ENCODE measurements at regions of chr13 and their contacts with region 1.

Region 1: GRCh38 chr13:45393941-45394570 is 24.1 kb downstream of the SLC25A30 start:
- DNase-seq: peak; percentile 63
- ATAC-seq: peak; percentile 98
- H3K4me3 Mint-ChIP-seq: no peak overlapping the region
- H3K27ac Mint-ChIP-seq: 0 out of 2 replicates have a peak overlapping the region, but pooled peaks have one; percentile 11
- H3K4me1 Mint-ChIP-seq: peaks cover 5% of the 10 kb centered on the region
- H3K27me3 Mint-ChIP-seq: no peaks in the 10 kb centered on the region
- CTCF ChIP-seq: peak; percentile 51

Region 2: GRCh38 chr13:45280751-45281634 is 113.1 kb before region 1 on chr13:
- CTCF ChIA-PET with region 1: no interaction called
- POLR2A ChIA-PET with region 1: no interaction called
- DNase-seq: peak; percentile 71
- ATAC-seq: peak; percentile 99
- H3K4me3 Mint-ChIP-seq: no peak overlapping the region
- H3K27ac Mint-ChIP-seq: peak overlapping the region; percentile 18; the same call in 1 of the 2 replicates
- H3K4me1 Mint-ChIP-seq: peaks cover 6% of the 10 kb centered on the region
- H3K27me3 Mint-ChIP-seq: no peaks in the 10 kb centered on the region
- CTCF ChIP-seq: no peak

Region 3: DNA sequence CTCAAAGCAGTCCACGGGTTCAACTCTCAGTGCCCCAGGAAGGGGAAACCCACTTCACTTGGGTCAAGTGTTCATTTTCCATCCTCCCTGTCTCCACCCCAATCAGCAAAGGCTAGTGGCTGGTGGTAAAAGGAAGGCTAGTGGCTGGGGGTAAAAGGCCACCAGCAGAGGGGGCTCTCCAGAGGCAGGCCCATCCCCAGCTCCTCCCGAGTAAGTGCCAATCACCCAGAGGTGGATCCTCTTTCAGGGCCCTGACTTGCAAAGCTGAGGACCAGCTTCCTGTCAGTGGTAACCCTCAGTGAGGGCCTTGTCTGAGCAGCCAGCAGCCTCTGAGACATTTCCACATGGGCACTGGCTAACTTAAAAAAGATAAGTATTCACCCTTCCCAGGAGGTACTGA is 31.1 kb before region 1 on chr13:
- CTCF ChIA-PET with region 1: interaction called, 26 read pairs
- POLR2A ChIA-PET with region 1: no interaction called
- DNase-seq: peak; percentile 68
- ATAC-seq: peak; percentile 91
- H3K4me3 Mint-ChIP-seq: no peak overlapping the region
- H3K27ac Mint-ChIP-seq: no peak overlapping the region
- H3K4me1 Mint-ChIP-seq: peaks cover 25% of the 10 kb centered on the region
- H3K27me3 Mint-ChIP-seq: no peaks in the 10 kb centered on the region; the same call in 1 of the 2 replicates
- CTCF ChIP-seq: peak; percentile 54

Region 4: DNA sequence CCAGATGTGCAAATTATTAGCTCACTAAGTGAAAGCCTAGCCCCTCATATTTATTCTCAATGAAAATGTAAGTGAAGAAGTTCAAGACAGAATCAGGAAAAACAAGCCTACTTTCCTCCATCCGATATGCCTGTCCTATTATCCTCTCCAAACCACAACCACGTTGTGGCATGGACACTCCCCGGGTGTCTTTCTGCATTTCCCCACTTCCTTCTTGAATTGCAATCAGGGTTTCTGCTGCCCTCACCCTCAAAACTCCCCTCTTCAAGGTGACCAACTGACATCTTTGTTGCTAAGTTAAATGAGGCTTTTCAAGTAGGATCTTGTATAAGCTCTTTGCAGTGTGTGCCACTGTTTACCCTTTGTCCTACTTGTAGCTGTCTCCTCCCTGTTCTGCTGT is 12.4 kb after region 1 on chr13:
- CTCF ChIA-PET with region 1: interaction called, 12 read pairs
- POLR2A ChIA-PET with region 1: no interaction called
- DNase-seq: no peak
- ATAC-seq: no peak
- H3K4me3 Mint-ChIP-seq: no peak overlapping the region
- H3K27ac Mint-ChIP-seq: no peak overlapping the region
- H3K4me1 Mint-ChIP-seq: no peaks in the 10 kb centered on the region
- H3K27me3 Mint-ChIP-seq: no peaks in the 10 kb centered on the region
- CTCF ChIP-seq: no peak

Region 5: DNA sequence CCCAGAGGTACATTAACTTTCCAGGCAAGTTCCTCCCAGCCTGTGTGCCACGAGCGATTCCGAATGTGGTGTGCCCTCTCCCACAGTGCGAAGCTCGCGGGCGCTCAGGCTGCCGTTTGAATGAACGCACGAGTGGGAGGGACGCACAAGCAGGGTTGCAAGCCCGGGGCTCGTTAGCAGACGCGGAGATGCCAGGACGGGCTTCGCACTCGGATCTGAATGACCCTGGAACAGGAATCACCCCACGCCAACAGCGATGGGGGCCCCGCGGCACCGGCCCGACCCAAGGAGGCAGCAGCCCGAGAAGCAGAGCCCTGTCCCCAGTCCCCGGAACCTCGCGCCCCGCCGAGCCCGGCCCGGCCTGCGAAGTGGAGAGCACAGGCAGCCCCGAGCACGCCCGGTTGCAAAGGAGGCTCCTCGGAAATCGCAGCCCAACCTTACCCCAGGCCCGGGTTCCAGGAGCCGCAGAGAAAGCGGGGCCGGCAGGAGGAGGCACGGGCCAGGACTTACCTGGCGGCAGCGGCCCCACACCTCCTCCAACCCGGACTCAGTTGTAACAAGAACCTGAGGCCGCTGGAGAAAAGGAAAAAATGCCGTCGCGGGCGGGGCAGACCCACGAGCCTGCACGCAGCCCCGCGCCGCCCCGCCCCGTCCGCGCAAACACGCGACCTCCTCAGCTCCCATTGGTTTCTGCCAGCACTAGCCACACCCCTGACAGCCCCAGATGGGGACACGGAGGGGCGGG is 23.9 kb after region 1 on chr13 and contains the start of gene SLC25A30:
- CTCF ChIA-PET with region 1: interaction called, 14 read pairs
- POLR2A ChIA-PET with region 1: interaction called, 6 read pairs
- DNase-seq: peak; percentile 96
- ATAC-seq: peak; percentile 97
- H3K4me3 Mint-ChIP-seq: peak within 1 kb of the TSS; percentile 86
- H3K27ac Mint-ChIP-seq: peak within 1 kb of the TSS; percentile 93
- H3K4me1 Mint-ChIP-seq: peaks cover 11% of the 10 kb centered on the region
- H3K27me3 Mint-ChIP-seq: peaks cover 30% of the 10 kb centered on the region
- CTCF ChIP-seq: no peak
- total RNA-seq, gene SLC25A30: 8.2 to 9.8 TPM (median 8.6 TPM) in 3 replicates

Region 6: GRCh38 chr13:45473627-45474026 is 79.6 kb after region 1 on chr13:
- CTCF ChIA-PET with region 1: interaction called, 12 read pairs
- POLR2A ChIA-PET with region 1: no interaction called
- DNase-seq: no peak
- ATAC-seq: peak; percentile 87
- H3K4me3 Mint-ChIP-seq: no peak overlapping the region
- H3K27ac Mint-ChIP-seq: no peak overlapping the region
- H3K4me1 Mint-ChIP-seq: peaks cover 2% of the 10 kb centered on the region; the same call in 1 of the 2 replicates
- H3K27me3 Mint-ChIP-seq: no peaks in the 10 kb centered on the region
- CTCF ChIP-seq: no peak

Region 7: GRCh38 chr13:45490068-45490467 is 96.0 kb after region 1 on chr13:
- CTCF ChIA-PET with region 1: interaction called, 10 read pairs
- POLR2A ChIA-PET with region 1: no interaction called
- DNase-seq: no peak
- ATAC-seq: peak; percentile 69
- H3K4me3 Mint-ChIP-seq: no peak overlapping the region
- H3K27ac Mint-ChIP-seq: no peak overlapping the region
- H3K4me1 Mint-ChIP-seq: no peaks in the 10 kb centered on the region
- H3K27me3 Mint-ChIP-seq: no peaks in the 10 kb centered on the region
- CTCF ChIP-seq: no peak